PC-3 (cell line): ENCODE measurements at regions of chr4 and their contacts with region 1.

Region 1: GRCh38 chr4:183407128-183407585 is 37.3 kb upstream of the CDKN2AIP start:
- DNase-seq: peak; percentile 71
- ATAC-seq: peak; percentile 92
- H3K4me3 ChIP-seq: peak overlapping the region; percentile 62
- H3K27ac ChIP-seq: no peak overlapping the region
- H3K4me1 ChIP-seq: peaks cover 5% of the 10 kb centered on the region; the same call in 1 of the 2 replicates
- H3K27me3 ChIP-seq: no peaks in the 10 kb centered on the region
- CTCF ChIP-seq: peak; percentile 86

Region 2: GRCh38 chr4:182862141-182862875 is 544.8 kb before region 1 on chr4:
- CTCF ChIA-PET with region 1: no interaction called
- POLR2A ChIA-PET with region 1: interaction called, 12 read pairs
- intact Hi-C with region 1: no loop called
- DNase-seq: no peak
- ATAC-seq: no peak
- H3K4me3 ChIP-seq: no peak overlapping the region
- H3K27ac ChIP-seq: no peak overlapping the region
- H3K4me1 ChIP-seq: 0 out of 2 replicates have a peak, but pooled peaks cover 5% of the 10 kb centered on the region
- H3K27me3 ChIP-seq: no peaks in the 10 kb centered on the region
- CTCF ChIP-seq: no peak

Region 3: DNA sequence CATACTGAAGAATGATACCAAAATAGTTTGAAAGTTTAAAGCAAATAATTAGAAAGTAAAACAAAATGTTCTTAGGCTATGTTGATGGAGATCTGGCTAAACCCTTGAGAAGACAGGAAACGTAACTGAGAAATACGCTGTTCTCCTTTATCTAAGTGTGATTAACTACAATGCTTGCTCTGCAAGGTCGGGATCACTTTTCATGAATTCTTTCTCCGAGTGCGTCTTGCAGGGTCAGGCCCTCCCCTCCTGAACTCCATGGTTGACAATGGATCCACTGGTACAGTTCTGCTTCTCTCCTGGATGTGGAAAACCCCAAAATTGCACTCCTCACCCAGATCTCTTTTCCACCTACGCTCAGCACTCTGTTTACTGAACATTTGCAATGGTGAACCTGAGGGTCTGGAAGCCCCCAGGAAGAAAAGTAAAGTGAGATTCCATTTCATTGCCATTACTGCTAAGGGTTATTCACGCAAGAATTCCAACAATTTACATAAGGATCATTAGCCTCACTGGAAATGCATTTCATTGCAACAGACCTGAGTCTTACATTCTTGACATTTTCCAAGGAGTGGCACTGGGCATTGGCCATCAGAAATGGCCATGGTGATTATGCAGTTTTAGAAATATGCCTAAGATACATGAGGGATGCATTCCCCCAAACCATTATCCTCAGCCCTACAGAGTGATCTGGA is 332.7 kb before region 1 on chr4:
- CTCF ChIA-PET with region 1: no interaction called
- POLR2A ChIA-PET with region 1: no interaction called
- intact Hi-C with region 1: loop called (anchors 5 kb)
- DNase-seq: no peak
- ATAC-seq: no peak
- H3K4me3 ChIP-seq: no peak overlapping the region
- H3K27ac ChIP-seq: no peak overlapping the region
- H3K4me1 ChIP-seq: no peaks in the 10 kb centered on the region
- H3K27me3 ChIP-seq: no peaks in the 10 kb centered on the region
- CTCF ChIP-seq: no peak

Region 4: GRCh38 chr4:183284965-183285364 is 122.2 kb before region 1 on chr4:
- CTCF ChIA-PET with region 1: no interaction called
- POLR2A ChIA-PET with region 1: no interaction called
- intact Hi-C with region 1: loop called (anchors 5 kb)
- DNase-seq: peak; percentile 48
- ATAC-seq: peak; percentile 94
- H3K4me3 ChIP-seq: no peak overlapping the region
- H3K27ac ChIP-seq: no peak overlapping the region
- H3K4me1 ChIP-seq: peaks cover 16% of the 10 kb centered on the region; the same call in 1 of the 2 replicates
- H3K27me3 ChIP-seq: no peaks in the 10 kb centered on the region
- CTCF ChIP-seq: no peak

Region 5: DNA sequence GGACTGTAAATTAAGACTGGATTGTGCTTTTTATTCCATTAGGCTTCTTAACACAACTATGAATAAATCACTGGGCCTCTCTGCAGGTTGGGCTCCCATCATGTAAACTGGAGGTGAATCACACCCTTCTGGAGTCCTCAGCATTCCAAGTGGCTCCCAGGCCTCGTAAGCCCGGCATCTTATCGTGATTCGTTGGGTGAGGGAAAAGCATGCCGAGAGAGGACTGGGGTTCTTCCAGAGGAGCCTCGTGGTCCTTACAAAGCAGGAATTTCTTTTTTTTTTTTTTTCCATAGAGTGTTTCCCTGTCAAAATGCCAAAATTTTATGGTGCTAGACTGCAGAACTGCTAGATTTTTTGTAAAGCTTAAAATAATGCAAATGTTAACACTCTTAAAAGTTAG is 107.1 kb before region 1 on chr4:
- CTCF ChIA-PET with region 1: interaction called, 10 read pairs
- POLR2A ChIA-PET with region 1: interaction called, 4 read pairs
- intact Hi-C with region 1: no loop called
- DNase-seq: no peak
- ATAC-seq: 0 out of 2 replicates have a peak, but pooled peaks have one; percentile 27
- H3K4me3 ChIP-seq: no peak overlapping the region
- H3K27ac ChIP-seq: no peak overlapping the region
- H3K4me1 ChIP-seq: no peaks in the 10 kb centered on the region; the same call in 1 of the 2 replicates
- H3K27me3 ChIP-seq: no peaks in the 10 kb centered on the region
- CTCF ChIP-seq: no peak

Region 6: DNA sequence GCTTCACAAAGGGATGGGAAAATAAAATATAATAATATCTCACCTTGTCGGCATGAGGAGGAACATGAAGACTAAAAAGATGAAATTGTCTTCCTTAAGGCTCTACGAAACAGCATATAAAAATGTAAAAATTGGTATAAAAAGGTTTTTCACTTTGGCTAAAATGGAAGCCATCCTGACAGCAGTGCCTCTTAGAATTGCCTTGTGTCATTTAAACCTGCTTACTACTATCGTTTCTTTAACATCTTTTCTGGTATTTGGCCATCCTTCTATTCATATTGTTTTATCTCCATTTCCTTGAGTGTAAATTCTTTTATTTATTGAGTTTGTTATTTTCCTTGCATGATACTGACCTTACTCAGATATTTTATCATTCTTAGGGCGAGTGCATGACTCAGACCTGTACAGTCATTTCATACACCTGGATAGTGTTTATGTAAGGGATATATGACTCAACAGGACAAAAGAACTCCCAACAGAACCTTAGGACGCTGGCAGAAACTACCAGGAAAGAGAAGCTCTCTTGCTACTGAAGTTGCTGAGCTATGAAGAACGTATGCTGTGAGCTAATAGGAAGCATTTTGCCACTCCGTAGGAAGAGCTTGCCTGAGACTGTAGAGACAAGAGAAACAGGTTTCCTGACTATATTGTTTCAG is 31.4 kb after region 1 on chr4:
- CTCF ChIA-PET with region 1: interaction called, 3 read pairs
- POLR2A ChIA-PET with region 1: no interaction called
- intact Hi-C with region 1: loop called (anchors 2 kb)
- DNase-seq: peak; percentile 94
- ATAC-seq: peak; percentile 92
- H3K4me3 ChIP-seq: peak overlapping the region; percentile 31; the same call in 1 of the 2 replicates
- H3K27ac ChIP-seq: peak overlapping the region; percentile 97
- H3K4me1 ChIP-seq: peaks cover 45% of the 10 kb centered on the region
- H3K27me3 ChIP-seq: no peaks in the 10 kb centered on the region
- CTCF ChIP-seq: no peak